Head of caudate nucleus (tissue), 42 donors: ENCODE measurements at regions of chr1 and their contacts with region 1.

Region 1: GRCh38 chr1:161045750-161046571 is at the start of gene USF1:
- DNase-seq: peak; percentile 86 to 97 (median 93)

Region 2: DNA sequence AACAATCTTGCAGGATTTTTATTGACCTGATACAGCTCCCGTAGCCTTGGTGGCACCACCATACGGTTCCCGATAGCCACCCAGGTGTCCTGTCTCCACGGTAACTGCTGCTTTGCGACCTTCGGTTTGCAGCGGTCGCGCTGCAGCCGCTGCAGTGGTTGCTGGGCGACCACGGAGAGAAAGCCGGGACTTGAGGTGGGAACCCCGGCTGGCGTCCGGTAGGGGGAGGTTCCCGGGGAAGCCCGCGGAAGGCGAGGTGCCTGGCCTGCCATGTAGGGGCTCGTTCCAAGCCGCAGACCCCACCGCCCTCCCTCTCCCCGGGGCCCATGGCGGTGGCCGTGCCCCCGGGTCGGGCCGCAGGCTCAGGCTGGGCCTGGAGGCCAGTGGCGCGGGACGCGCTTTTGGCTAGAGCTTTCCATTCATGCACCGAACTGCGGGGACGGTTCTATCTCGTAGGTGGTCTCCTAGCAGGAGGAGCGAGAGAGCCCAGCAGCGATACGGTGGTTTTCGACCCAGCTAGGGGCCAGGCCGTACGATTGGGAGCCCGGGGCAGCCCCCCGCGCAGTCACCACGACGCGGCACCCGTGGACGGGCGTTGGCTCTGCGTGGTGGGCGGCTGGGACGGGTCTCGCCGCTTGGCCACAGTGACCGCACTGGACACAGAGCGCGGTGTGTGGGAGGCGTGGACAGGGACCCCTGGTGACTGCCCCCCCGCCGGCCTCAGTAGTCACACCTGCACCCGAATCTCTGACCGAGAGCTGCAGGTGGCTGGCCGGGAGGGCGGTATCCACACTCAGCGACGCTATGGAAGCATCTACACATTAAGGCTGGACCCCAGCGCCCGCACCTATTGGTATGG is 52.5 kb after region 1 on chr1 and contains the start of gene KLHDC9:
- intact Hi-C with region 1: loop called (anchors 2 kb)
- DNase-seq: peak; percentile 60 to 94 (median 82)

Region 3: GRCh38 chr1:161132410-161133219 is 86.7 kb after region 1 on chr1 and contains the start of gene DEDD:
- intact Hi-C with region 1: loop called (anchors 5 kb)
- DNase-seq: peak; percentile 82 to 97 (median 93)

Region 4: DNA sequence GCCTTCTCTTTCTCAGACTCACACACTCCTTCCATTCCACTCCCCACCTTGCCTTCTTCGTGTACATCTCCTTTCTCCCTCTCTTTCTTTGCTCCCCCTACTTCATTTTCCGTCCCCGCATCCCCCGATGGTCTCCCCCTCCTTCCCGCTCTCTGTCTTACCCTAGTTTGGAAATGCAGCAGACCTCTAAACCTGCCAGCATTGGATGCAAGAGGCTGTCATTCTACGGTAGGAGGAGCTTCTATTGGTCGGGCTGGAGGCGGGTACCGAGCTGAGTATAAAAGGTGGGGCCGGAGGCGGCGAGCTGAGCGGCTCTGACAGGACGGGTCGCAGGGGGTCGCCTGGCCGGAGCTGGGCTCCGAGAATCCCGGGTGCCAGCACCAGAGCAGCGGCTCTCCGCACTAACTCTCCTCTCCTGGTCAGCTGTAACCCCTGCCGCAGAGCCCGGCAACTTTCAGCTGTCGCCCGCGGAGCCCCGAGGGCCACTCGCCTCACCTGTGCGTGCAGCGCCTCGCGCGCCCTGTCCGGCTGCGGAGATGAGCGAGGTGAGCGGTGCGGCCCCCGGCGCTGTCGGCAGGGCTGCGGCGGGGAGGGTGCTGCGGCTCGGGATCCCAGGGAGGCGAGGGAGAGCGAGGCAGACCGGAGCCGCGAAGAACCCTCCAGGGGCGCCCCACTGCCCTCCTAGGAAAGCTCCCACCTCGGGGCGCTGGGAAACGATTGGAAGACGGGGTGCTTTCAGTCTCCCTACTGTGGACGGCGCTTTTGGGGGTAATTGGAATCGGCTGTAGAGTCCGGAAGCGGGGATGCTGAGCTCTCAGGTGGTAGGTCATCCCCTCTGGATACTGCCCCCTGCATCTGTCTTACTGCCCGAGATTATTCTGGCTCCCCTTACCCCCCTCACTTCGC is 212.7 kb after region 1 on chr1 and contains the start of gene PCP4L1:
- intact Hi-C with region 1: no loop called
- DNase-seq: peak; percentile 63 to 95 (median 86)